Activated naive CD4-positive, alpha-beta T cell treated with anti-CD3 and anti-CD28 coated beads for 36 hours (primary cell): ENCODE measurements at regions of chr12 and their contacts with region 1.

Region 1: GRCh38 chr12:66693901-66694675 is 15.2 kb upstream of the GRIP1 start:
- DNase-seq: peak; percentile 41
- H3K4me3 Mint-ChIP-seq: no peak overlapping the region
- H3K27ac Mint-ChIP-seq: no peak overlapping the region
- H3K4me1 Mint-ChIP-seq: peaks cover 13% of the 10 kb centered on the region
- H3K27me3 Mint-ChIP-seq: no peaks in the 10 kb centered on the region

Region 2: GRCh38 chr12:66269757-66270383 is 424.2 kb before region 1 on chr12:
- CTCF ChIA-PET with region 1: interaction called, 7 read pairs
- intact Hi-C with region 1: loop called (anchors 1 kb)
- DNase-seq: peak; percentile 52
- H3K4me3 Mint-ChIP-seq: no peak overlapping the region
- H3K27ac Mint-ChIP-seq: no peak overlapping the region
- H3K4me1 Mint-ChIP-seq: peaks cover 5% of the 10 kb centered on the region
- H3K27me3 Mint-ChIP-seq: peaks cover 3% of the 10 kb centered on the region

Region 3: GRCh38 chr12:66352197-66352596 is 341.9 kb before region 1 on chr12:
- CTCF ChIA-PET with region 1: no interaction called
- intact Hi-C with region 1: loop called (anchors 1 kb)
- DNase-seq: peak; percentile 35
- H3K4me3 Mint-ChIP-seq: no peak overlapping the region
- H3K27ac Mint-ChIP-seq: no peak overlapping the region
- H3K4me1 Mint-ChIP-seq: no peaks in the 10 kb centered on the region
- H3K27me3 Mint-ChIP-seq: no peaks in the 10 kb centered on the region

Region 4: DNA sequence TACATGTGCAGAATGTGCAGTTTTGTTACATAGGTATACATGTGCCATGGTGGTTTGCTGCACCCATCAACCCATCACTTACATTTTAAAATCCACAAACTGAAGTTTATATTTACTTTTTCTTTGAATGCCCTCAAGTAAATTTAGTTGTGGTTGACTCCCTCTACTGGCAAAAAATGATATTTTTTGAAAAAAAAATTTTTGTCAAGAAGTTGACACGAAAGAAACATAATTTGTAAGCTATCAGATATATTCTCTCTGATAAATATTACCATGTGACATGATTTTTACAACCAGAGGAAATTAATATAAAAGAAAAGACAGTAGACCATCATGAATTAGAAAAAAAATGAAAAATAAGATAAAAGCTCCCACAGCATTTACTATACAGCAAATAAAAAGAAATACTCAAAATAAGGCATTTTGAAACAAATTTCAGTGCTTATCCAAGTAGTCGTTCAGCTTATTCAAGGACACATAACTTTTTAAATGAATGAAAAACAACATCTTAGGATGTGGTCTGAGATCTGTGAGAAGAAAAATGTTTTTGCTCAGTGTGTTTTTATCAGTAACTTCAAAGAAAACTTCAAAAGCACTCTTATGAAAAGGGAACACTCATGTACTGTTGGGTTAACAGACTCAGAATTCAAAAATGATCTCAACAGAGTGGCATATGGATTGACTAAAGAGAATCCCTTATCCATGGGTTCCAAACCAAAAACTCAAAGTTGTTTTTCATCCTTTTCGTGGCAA is 14.8 kb after region 1 on chr12:
- CTCF ChIA-PET with region 1: interaction called, 20 read pairs
- intact Hi-C with region 1: no loop called
- DNase-seq: no peak
- H3K4me3 Mint-ChIP-seq: peak overlapping the region; percentile 32
- H3K27ac Mint-ChIP-seq: peak overlapping the region; percentile 7
- H3K4me1 Mint-ChIP-seq: peaks cover 33% of the 10 kb centered on the region
- H3K27me3 Mint-ChIP-seq: no peaks in the 10 kb centered on the region

Region 5: DNA sequence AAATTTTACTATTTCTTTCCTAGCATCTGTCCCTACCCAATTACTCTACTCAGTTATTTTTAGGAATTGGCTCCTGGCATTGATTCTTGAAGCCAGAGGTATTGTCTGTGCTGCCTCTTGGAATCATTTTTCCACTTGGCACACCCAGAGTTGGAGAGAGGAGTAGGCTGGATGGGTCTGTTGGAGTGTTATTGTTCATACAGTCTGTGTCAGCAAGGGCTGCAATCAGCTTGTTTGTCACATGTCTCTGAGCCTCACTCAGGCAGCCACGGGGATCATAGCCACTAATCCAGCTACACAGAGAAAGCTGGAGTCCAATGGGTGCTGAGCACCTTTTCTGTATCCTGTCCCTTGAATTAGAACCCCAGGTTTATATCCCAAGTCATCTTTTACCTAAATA is 778.5 kb after region 1 on chr12:
- CTCF ChIA-PET with region 1: no interaction called
- intact Hi-C with region 1: no loop called
- DNase-seq: no peak
- H3K4me3 Mint-ChIP-seq: no peak overlapping the region
- H3K27ac Mint-ChIP-seq: no peak overlapping the region
- H3K4me1 Mint-ChIP-seq: peaks cover 14% of the 10 kb centered on the region
- H3K27me3 Mint-ChIP-seq: no peaks in the 10 kb centered on the region